ENCODE measurements at regions of chr16 and their contacts with region 1.

Region 1: GRCh38 chr16:67521095-67521804 is 7.4 kb upstream of the RIPOR1 start:
- DNase-seq: peak; percentile 91 to 99
- H3K4me3 ChIP-seq: peak overlapping the region; percentile 22 to 62 (median 50); a peak in 7 of 8 replicates
- H3K27ac ChIP-seq: peak overlapping the region; percentile 46; the same call in 1 of the 2 replicates
- H3K4me1 ChIP-seq: no peaks in the 10 kb centered on the region
- H3K27me3 ChIP-seq: peaks cover 5 to 44% (median 34%) of the 10 kb centered on the region in 4 experiments
- CTCF ChIP-seq: peak; percentile 99 to 100 (median 99)
- EP300 ChIP-seq: 0 out of 3 replicates have a peak, but pooled peaks of 1 of the 2 experiments have one; percentile 26
- POLR2A ChIP-seq: 0 out of 3 replicates have a peak, but pooled peaks of 1 of the 2 experiments have one; percentile 45
- RAD21 ChIP-seq: peak; percentile 93 to 95

Region 2: DNA sequence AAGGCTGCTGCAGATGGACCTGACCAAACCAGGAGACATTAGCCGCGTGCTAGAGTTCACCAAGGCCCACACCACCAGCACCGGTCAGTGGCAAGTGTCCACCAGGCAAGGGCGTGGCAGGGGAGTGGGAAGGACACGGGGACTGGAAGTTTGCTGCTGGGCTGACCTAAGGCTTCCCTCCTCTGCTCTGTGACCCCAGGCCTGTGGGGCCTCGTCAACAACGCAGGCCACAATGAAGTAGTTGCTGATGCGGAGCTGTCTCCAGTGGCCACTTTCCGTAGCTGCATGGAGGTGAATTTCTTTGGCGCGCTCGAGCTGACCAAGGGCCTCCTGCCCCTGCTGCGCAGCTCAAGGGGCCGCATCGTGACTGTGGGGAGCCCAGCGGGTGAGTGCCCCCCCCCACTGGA is 85.5 kb before region 1 on chr16:
- CTCF ChIA-PET with region 1: no interaction called
- POLR2A ChIA-PET with region 1: no interaction called
- DNase-seq: no peak
- H3K4me3 ChIP-seq: no peak overlapping the region
- H3K27ac ChIP-seq: no peak overlapping the region
- H3K4me1 ChIP-seq: peaks cover 0 to 17% (median 14%) of the 10 kb centered on the region in 4 experiments; a peak in 6 of 7 replicates
- H3K27me3 ChIP-seq: no peaks in the 10 kb centered on the region; a peak in 1 of 7 replicates
- CTCF ChIP-seq: peak in 2 of 3 experiments; percentile 26 to 34; a peak in 3 of 4 replicates
- EP300 ChIP-seq: no peak
- POLR2A ChIP-seq: no peak
- RAD21 ChIP-seq: no peak; a peak in 1 of 4 replicates

Region 3: GRCh38 chr16:67499106-67499505 is 22.1 kb before region 1 on chr16:
- CTCF ChIA-PET with region 1: interaction called, 335 read pairs
- POLR2A ChIA-PET with region 1: no interaction called
- DNase-seq: no peak
- H3K4me3 ChIP-seq: no peak overlapping the region
- H3K27ac ChIP-seq: no peak overlapping the region
- H3K4me1 ChIP-seq: no peaks in the 10 kb centered on the region
- H3K27me3 ChIP-seq: peaks cover 0 to 15% (median 12%) of the 10 kb centered on the region in 4 experiments; a peak in 4 of 7 replicates
- CTCF ChIP-seq: no peak
- EP300 ChIP-seq: no peak
- POLR2A ChIP-seq: no peak
- RAD21 ChIP-seq: no peak

Region 4: GRCh38 chr16:67546761-67547422 is 25.6 kb after region 1 on chr16:
- CTCF ChIA-PET with region 1: interaction called, 41 read pairs
- POLR2A ChIA-PET with region 1: interaction called, 4 read pairs
- DNase-seq: peak; percentile 70 to 92
- H3K4me3 ChIP-seq: no peak overlapping the region
- H3K27ac ChIP-seq: no peak overlapping the region
- H3K4me1 ChIP-seq: peaks cover 0 to 4% (median 2%) of the 10 kb centered on the region in 4 experiments; a peak in 3 of 7 replicates
- H3K27me3 ChIP-seq: no peaks in the 10 kb centered on the region; a peak in 3 of 7 replicates
- CTCF ChIP-seq: peak; percentile 95 to 97 (median 97)
- EP300 ChIP-seq: no peak
- POLR2A ChIP-seq: no peak
- RAD21 ChIP-seq: peak; percentile 92 to 94

Region 5: DNA sequence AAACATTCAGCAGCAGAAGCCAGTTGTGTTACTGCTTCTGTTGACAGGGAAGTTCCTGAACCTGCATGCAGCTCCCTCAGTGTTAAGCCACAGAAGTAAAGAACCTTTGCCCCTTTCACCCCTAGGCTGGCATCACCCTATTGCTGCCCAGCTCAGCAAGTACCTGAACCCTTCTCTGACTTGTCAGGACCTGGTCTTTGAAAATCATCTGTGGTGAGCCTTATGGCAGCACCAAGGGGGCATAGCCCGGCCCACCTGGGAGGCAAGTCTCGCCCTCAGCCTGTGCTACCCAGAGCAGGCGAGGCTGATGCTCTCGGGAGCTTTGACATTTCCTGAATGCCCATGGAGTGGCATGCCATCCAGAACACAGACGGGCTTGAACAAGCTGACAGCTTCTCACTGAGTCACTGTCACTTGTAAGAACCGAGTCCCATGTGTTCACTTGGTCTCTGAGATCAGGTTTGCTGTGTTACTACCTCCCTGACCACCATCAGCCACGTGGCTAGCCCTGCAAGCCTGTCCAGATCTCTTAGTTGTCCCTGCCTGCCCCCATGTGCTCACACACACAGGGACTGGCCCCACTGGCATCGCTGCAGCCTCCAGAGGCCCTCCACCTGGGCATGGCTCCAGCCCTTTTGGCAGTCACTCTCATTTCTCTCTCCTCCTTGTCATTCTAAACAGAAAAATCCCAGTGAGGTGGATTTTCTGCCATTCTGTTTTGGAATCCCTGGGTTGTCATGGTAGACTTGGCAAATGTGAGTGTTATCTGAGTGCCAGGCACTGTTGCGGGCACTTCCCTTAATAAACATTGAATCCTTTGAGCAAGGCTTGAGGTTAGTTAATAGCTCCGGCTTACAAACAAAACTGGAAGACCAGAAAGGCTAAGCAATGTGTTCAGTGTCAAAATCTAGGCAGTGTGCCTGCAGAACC is 120.8 kb after region 1 on chr16:
- CTCF ChIA-PET with region 1: interaction called, 164 read pairs
- POLR2A ChIA-PET with region 1: interaction called, 4 read pairs
- DNase-seq: no peak
- H3K4me3 ChIP-seq: no peak overlapping the region
- H3K27ac ChIP-seq: no peak overlapping the region
- H3K4me1 ChIP-seq: peaks cover 0 to 9% (median 2%) of the 10 kb centered on the region in 4 experiments; a peak in 5 of 7 replicates
- H3K27me3 ChIP-seq: peaks cover 0 to 11% (median 6%) of the 10 kb centered on the region in 4 experiments; a peak in 4 of 7 replicates
- CTCF ChIP-seq: no peak
- EP300 ChIP-seq: no peak
- POLR2A ChIP-seq: no peak
- RAD21 ChIP-seq: no peak

Region 6: GRCh38 chr16:67667817-67668494 is 146.7 kb after region 1 on chr16:
- CTCF ChIA-PET with region 1: interaction called, 72 read pairs
- POLR2A ChIA-PET with region 1: interaction called, 5 read pairs
- DNase-seq: peak; percentile 81 to 82
- H3K4me3 ChIP-seq: no peak overlapping the region; a peak in 1 of 8 replicates
- H3K27ac ChIP-seq: no peak overlapping the region
- H3K4me1 ChIP-seq: peaks cover 0 to 25% (median 15%) of the 10 kb centered on the region in 4 experiments; a peak in 5 of 7 replicates
- H3K27me3 ChIP-seq: peaks cover 0 to 3% (median 0%) of the 10 kb centered on the region in 4 experiments; a peak in 2 of 7 replicates
- CTCF ChIP-seq: peak in 2 of 3 experiments; percentile 87 to 96; a peak in 3 of 4 replicates
- EP300 ChIP-seq: no peak
- POLR2A ChIP-seq: no peak
- RAD21 ChIP-seq: peak; percentile 50 to 68

Measured in H1 (cell line).